CD8-positive, alpha-beta T cell (primary cell): ENCODE measurements at regions of chr13 and their contacts with region 1.

Region 1: GRCh38 chr13:102580552-102581169 is 16.1 kb upstream of the TPP2 start:
- DNase-seq: peak in 4 of 9 experiments; percentile 20 to 80 (median 60)
- ATAC-seq: peak; percentile 87
- H3K4me3 ChIP-seq: no peak overlapping the region
- H3K4me3 Mint-ChIP-seq: no peak overlapping the region
- H3K27ac ChIP-seq: no peak overlapping the region
- H3K27ac Mint-ChIP-seq: no peak overlapping the region
- H3K4me1 ChIP-seq: peaks cover 9% of the 10 kb centered on the region
- H3K4me1 Mint-ChIP-seq: peaks cover 16% of the 10 kb centered on the region
- H3K27me3 ChIP-seq: peaks cover 0 to 2% of the 10 kb centered on the region in 2 experiments
- H3K27me3 Mint-ChIP-seq: peaks cover 3% of the 10 kb centered on the region
- CTCF ChIP-seq: peak; percentile 88

Region 2: GRCh38 chr13:102609696-102610095 is 29.0 kb after region 1 on chr13:
- CTCF ChIA-PET with region 1: interaction called, 16 read pairs
- POLR2A ChIA-PET with region 1: no interaction called
- intact Hi-C with region 1: no loop called
- DNase-seq: peak in 2 of 9 experiments; percentile 35 to 52
- ATAC-seq: peak; percentile 62
- H3K4me3 ChIP-seq: no peak overlapping the region
- H3K4me3 Mint-ChIP-seq: peak overlapping the region; percentile 0
- H3K27ac ChIP-seq: no peak overlapping the region
- H3K27ac Mint-ChIP-seq: peak overlapping the region; percentile 49
- H3K4me1 ChIP-seq: peaks cover 38% of the 10 kb centered on the region
- H3K4me1 Mint-ChIP-seq: peaks cover 69% of the 10 kb centered on the region
- H3K27me3 ChIP-seq: no peaks in the 10 kb centered on the region
- H3K27me3 Mint-ChIP-seq: no peaks in the 10 kb centered on the region
- CTCF ChIP-seq: no peak

Region 3: GRCh38 chr13:102620516-102620915 is 39.9 kb after region 1 on chr13:
- CTCF ChIA-PET with region 1: interaction called, 5 read pairs
- POLR2A ChIA-PET with region 1: interaction called, 6 read pairs
- intact Hi-C with region 1: loop called in 1 of 2 experiments (anchors 5 kb)
- DNase-seq: no peak
- ATAC-seq: no peak
- H3K4me3 ChIP-seq: no peak overlapping the region
- H3K4me3 Mint-ChIP-seq: no peak overlapping the region
- H3K27ac ChIP-seq: no peak overlapping the region
- H3K27ac Mint-ChIP-seq: peak overlapping the region; percentile 12
- H3K4me1 ChIP-seq: no peaks in the 10 kb centered on the region
- H3K4me1 Mint-ChIP-seq: peaks cover 18% of the 10 kb centered on the region
- H3K27me3 ChIP-seq: no peaks in the 10 kb centered on the region
- H3K27me3 Mint-ChIP-seq: no peaks in the 10 kb centered on the region
- CTCF ChIP-seq: no peak

Region 4: GRCh38 chr13:102657630-102658029 is 77.0 kb after region 1 on chr13:
- CTCF ChIA-PET with region 1: interaction called, 3 read pairs
- POLR2A ChIA-PET with region 1: interaction called, 3 read pairs
- intact Hi-C with region 1: loop called in 1 of 2 experiments (anchors 2 kb)
- DNase-seq: peak in 2 of 9 experiments; percentile 13 to 27
- ATAC-seq: peak; percentile 55
- H3K4me3 ChIP-seq: no peak overlapping the region
- H3K4me3 Mint-ChIP-seq: no peak overlapping the region
- H3K27ac ChIP-seq: no peak overlapping the region
- H3K27ac Mint-ChIP-seq: no peak overlapping the region
- H3K4me1 ChIP-seq: no peaks in the 10 kb centered on the region
- H3K4me1 Mint-ChIP-seq: no peaks in the 10 kb centered on the region
- H3K27me3 ChIP-seq: no peaks in the 10 kb centered on the region
- H3K27me3 Mint-ChIP-seq: no peaks in the 10 kb centered on the region
- CTCF ChIP-seq: peak; percentile 63

Region 5: GRCh38 chr13:102724923-102725322 is 144.3 kb after region 1 on chr13:
- CTCF ChIA-PET with region 1: interaction called, 10 read pairs
- POLR2A ChIA-PET with region 1: no interaction called
- intact Hi-C with region 1: loop called (anchors 1 to 5 kb)
- DNase-seq: peak in 2 of 9 experiments; percentile 21 to 46
- ATAC-seq: no peak
- H3K4me3 ChIP-seq: no peak overlapping the region
- H3K4me3 Mint-ChIP-seq: no peak overlapping the region
- H3K27ac ChIP-seq: no peak overlapping the region
- H3K27ac Mint-ChIP-seq: no peak overlapping the region
- H3K4me1 ChIP-seq: no peaks in the 10 kb centered on the region
- H3K4me1 Mint-ChIP-seq: peaks cover 2% of the 10 kb centered on the region
- H3K27me3 ChIP-seq: peaks cover 0 to 2% of the 10 kb centered on the region in 2 experiments
- H3K27me3 Mint-ChIP-seq: peaks cover 8% of the 10 kb centered on the region
- CTCF ChIP-seq: no peak

Region 6: GRCh38 chr13:102800145-102801041 is 219.7 kb after region 1 on chr13:
- CTCF ChIA-PET with region 1: interaction called, 11 read pairs
- POLR2A ChIA-PET with region 1: interaction called, 4 read pairs
- intact Hi-C with region 1: loop called (anchors 1 kb)
- DNase-seq: peak; percentile 65 to 89 (median 84)
- ATAC-seq: peak; percentile 77
- H3K4me3 ChIP-seq: peak overlapping the region; percentile 62 to 86
- H3K4me3 Mint-ChIP-seq: peak overlapping the region; percentile 92
- H3K27ac ChIP-seq: peak overlapping the region; percentile 36 to 44
- H3K27ac Mint-ChIP-seq: peak overlapping the region; percentile 74
- H3K4me1 ChIP-seq: peaks cover 10% of the 10 kb centered on the region
- H3K4me1 Mint-ChIP-seq: peaks cover 30% of the 10 kb centered on the region
- H3K27me3 ChIP-seq: peaks cover 0 to 5% of the 10 kb centered on the region in 2 experiments
- H3K27me3 Mint-ChIP-seq: peaks cover 11% of the 10 kb centered on the region
- CTCF ChIP-seq: peak; percentile 64

Region 7: GRCh38 chr13:102838982-102839381 is 258.3 kb after region 1 on chr13:
- CTCF ChIA-PET with region 1: no interaction called
- POLR2A ChIA-PET with region 1: no interaction called
- intact Hi-C with region 1: no loop called
- DNase-seq: no peak
- ATAC-seq: no peak
- H3K4me3 ChIP-seq: no peak overlapping the region
- H3K4me3 Mint-ChIP-seq: no peak overlapping the region
- H3K27ac ChIP-seq: no peak overlapping the region
- H3K27ac Mint-ChIP-seq: no peak overlapping the region
- H3K4me1 ChIP-seq: no peaks in the 10 kb centered on the region
- H3K4me1 Mint-ChIP-seq: no peaks in the 10 kb centered on the region
- H3K27me3 ChIP-seq: no peaks in the 10 kb centered on the region
- H3K27me3 Mint-ChIP-seq: no peaks in the 10 kb centered on the region
- CTCF ChIP-seq: no peak